Right ventricle myocardium superior (tissue), 1 donor: ENCODE measurements at regions of chr4 and their contacts with region 1.

Region 1: DNA sequence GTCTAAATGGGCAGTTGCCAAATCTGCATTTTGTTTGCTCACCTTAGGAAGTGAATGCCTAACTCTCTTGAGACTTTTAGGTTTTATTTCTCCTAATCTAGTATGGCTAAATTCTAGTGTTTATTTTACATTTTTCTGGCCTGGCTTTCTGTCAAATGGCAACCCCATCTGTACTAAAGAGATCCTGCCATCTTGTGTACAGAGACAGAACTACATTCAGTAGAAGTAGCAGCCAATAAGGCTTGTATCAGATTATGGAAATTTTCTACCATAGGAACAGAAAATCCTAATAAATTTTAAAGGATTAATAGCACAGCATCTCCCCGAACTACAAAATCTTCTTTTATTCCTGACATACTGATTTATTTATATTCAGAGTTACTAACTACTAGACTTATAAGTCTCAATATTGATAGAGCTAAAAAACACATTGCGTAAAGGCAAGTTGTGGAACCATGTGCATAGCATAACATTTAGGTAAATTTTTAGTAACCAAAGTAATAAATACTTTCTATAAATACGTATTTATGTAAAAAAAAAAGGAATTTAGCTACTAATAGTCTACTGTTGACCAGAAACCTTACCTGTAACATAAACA is 45.5 kb downstream of the TMEM144 start:
- DNase-seq: no peak
- ATAC-seq: peak; percentile 57

Region 2: GRCh38 chr4:157992038-157992705 is 263.7 kb before region 1 on chr4:
- intact Hi-C with region 1: loop called (anchors 5 kb)
- DNase-seq: no peak
- ATAC-seq: peak; percentile 95

Region 3: DNA sequence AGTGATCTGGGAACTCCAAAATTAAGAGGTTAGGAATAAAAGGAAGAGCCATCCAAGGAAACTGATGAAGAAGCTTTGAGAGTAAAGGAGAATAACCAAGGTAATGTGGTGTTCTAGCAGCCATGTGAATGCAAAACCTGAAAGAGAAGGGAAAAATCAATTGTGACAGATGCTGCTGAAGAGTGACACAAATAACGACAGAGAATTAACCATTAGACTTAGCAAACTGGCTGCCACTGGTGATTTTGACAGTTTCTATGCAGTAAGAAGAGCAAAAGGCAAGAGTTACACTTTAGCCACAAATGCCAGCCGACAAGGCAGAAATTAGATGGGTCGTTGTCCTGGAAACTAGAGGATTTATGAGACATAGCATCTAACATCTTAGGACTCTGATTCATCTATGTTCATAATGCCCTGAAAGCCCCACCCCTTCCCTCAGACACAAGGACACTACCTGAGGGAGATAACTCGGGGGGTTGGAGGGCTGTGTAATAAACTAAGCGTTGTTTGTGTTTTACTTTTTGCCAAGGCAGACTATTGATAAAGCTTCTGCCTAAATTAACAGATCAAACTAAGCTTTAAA is 58.5 kb before region 1 on chr4:
- intact Hi-C with region 1: loop called (anchors 5 kb)
- DNase-seq: no peak
- ATAC-seq: no peak

Region 4: DNA sequence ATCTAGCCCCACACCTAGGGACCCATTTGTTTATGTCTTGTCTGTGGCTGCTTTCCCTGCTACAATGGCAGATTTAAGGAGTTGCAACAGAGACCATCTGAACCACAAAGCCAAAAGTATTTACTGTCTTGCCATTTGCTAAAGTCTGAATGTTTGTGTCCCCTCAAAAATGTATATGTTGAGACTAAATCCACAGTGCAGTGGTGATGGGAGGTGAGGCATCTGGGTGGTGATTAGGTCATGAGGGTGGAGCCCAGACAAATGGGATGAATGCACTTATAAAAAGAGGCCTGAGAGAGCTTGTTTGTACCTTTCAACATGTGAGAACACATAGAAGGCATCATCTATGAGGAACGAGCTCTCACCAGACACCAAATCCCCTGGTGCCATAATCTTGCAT is 91.7 kb after region 1 on chr4:
- intact Hi-C with region 1: no loop called
- DNase-seq: no peak
- ATAC-seq: no peak

Region 5: GRCh38 chr4:158624889-158625478 is 369.2 kb after region 1 on chr4:
- intact Hi-C with region 1: loop called (anchors 5 kb)
- DNase-seq: no peak
- ATAC-seq: peak; percentile 90